CD4-positive, alpha-beta memory T cell (primary cell): ENCODE measurements at regions of chr5 and their contacts with region 1.

Region 1: GRCh38 chr5:72307968-72308852 is 11.8 kb downstream of the MRPS27 start:
- DNase-seq: peak; percentile 95 to 96 (median 96)
- H3K4me3 ChIP-seq: peak overlapping the region; percentile 79 to 94
- H3K4me3 Mint-ChIP-seq: peak overlapping the region; percentile 72 to 94 (median 92)
- H3K27ac ChIP-seq: peak overlapping the region; percentile 88
- H3K27ac Mint-ChIP-seq: peak overlapping the region; percentile 79 to 97 (median 95)
- H3K4me1 ChIP-seq: peaks cover 13% of the 10 kb centered on the region
- H3K4me1 Mint-ChIP-seq: peaks cover 10 to 22% (median 18%) of the 10 kb centered on the region in 4 donors
- H3K27me3 ChIP-seq: no peaks in the 10 kb centered on the region
- H3K27me3 Mint-ChIP-seq: no peaks in the 10 kb centered on the region

Region 2: DNA sequence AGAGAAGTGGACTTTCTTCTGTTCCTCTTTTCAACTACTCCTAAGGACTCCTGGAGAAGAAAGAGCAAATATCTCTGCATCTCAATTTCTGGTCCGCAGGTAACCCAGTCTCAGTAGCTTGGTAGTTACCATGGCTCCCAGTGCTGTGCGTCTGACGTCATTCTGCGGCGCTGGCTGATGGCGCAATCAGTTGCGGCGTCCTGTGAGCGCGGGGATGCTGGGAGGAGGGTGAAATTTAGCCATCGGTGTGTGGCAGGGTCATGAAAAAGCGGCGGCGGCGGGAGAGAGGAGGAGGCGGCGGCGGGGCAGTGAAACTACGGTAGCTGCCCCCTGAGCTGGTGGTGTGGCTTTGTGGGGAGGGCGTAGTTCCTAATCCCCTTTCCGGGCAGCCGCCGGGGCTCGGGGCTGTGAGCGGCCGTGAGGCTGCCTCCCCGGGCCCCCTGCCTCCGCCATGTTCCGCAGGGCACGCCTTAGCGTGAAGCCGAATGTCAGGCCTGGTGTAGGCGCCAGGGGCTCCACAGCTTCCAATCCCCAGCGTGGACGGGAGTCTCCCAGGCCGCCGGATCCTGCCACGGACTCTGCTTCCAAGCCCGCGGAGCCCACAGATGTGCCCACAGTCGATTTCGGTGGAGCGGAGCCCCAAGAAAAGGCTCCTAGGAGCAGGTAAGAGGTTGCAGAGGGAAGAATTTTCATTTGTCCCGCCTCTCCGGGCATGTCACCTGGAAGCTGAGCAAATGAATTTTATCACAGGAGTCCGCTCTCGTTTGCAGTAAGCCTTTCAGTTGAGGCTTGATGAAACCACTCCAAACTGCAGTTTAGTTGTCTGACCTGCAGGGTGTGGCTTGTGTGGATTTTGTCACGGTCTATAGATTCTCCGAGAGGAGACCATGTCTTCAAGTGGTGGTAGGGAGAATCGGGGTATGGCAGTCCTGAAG is 852.5 kb before region 1 on chr5 and contains the start of gene BDP1:
- CTCF ChIA-PET with region 1: no interaction called
- POLR2A ChIA-PET with region 1: no interaction called
- intact Hi-C with region 1: loop called (anchors 5 kb)
- DNase-seq: peak; percentile 96 to 98 (median 97)
- H3K4me3 ChIP-seq: peak within 1 kb of the TSS; percentile 93 to 96
- H3K4me3 Mint-ChIP-seq: peak within 1 kb of the TSS; percentile 96 to 100 (median 98)
- H3K27ac ChIP-seq: peak within 1 kb of the TSS; percentile 84
- H3K27ac Mint-ChIP-seq: peak within 1 kb of the TSS; percentile 93 to 100 (median 99)
- H3K4me1 ChIP-seq: peaks cover 23% of the 10 kb centered on the region
- H3K4me1 Mint-ChIP-seq: peaks cover 21 to 36% (median 30%) of the 10 kb centered on the region in 4 donors
- H3K27me3 ChIP-seq: peaks cover 5% of the 10 kb centered on the region
- H3K27me3 Mint-ChIP-seq: peaks cover 5 to 7% of the 10 kb centered on the region in 2 donors
- total RNA-seq, gene BDP1: 45.1 to 47.9 TPM

Region 3: DNA sequence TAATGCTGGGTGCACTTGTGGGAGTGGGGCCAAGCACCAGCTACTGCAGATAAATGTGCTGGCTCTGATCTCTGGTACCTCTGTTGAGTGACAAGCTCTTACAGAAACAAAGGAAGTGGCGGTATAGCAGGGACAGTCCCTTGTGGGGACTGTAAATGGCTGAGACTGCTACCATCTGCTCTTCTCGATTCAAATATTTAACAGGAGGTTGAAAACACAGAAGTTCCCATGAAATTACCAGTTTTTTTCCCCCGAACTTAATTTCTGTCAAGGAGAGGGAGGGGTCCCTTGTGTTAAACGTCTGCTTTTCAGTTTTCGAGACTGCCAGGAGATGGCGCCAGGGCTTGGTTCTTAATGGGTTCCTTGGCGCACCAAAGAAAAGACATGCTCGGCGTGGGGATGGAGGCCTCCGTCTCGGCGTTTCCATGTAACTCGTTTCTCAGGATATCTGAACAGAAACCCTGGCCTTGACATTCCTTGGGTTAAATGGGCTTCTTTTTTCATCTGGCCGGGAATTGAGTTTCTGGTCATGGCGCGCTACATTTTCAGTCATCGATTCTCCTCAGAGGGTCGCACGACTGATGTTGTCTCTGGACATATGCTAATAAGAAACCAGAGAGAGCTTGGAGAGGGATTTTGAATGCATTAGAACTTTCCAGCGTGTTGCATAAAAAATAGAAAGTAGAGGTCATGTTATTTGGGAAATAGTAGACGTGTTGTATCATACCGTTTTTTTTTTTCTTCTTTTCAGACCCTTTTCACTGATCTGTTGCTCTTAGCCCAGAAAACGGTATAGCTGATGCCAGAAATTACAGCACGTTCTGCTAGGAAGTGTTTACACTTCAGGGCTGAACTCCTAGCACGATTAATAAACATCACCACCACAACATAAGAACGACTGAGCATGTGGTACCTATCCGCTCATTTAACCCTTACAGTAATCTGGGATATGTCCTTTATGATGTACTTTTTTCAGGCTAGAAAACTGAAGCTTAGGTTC is 525.1 kb before region 1 on chr5:
- CTCF ChIA-PET with region 1: interaction called, 13 read pairs
- POLR2A ChIA-PET with region 1: no interaction called
- intact Hi-C with region 1: no loop called
- DNase-seq: peak in 4 of 5 donors; percentile 10 to 12 (median 12)
- H3K4me3 ChIP-seq: peak overlapping the region in 1 of 2 donors; percentile 9
- H3K4me3 Mint-ChIP-seq: peak overlapping the region; percentile 54 to 77 (median 72)
- H3K27ac ChIP-seq: no peak overlapping the region
- H3K27ac Mint-ChIP-seq: peak overlapping the region in 6 of 7 donors; percentile 5 to 67 (median 50)
- H3K4me1 ChIP-seq: peaks cover 16% of the 10 kb centered on the region
- H3K4me1 Mint-ChIP-seq: peaks cover 8 to 19% (median 15%) of the 10 kb centered on the region in 4 donors
- H3K27me3 ChIP-seq: no peaks in the 10 kb centered on the region
- H3K27me3 Mint-ChIP-seq: peaks cover 1 to 10% of the 10 kb centered on the region in 2 donors

Region 4: GRCh38 chr5:72138943-72139521 is 169.2 kb before region 1 on chr5:
- CTCF ChIA-PET with region 1: interaction called, 45 read pairs
- POLR2A ChIA-PET with region 1: interaction called, 4 read pairs
- intact Hi-C with region 1: loop called (anchors 1 kb)
- DNase-seq: no peak
- H3K4me3 ChIP-seq: no peak overlapping the region
- H3K4me3 Mint-ChIP-seq: no peak overlapping the region
- H3K27ac ChIP-seq: no peak overlapping the region
- H3K27ac Mint-ChIP-seq: no peak overlapping the region
- H3K4me1 ChIP-seq: no peaks in the 10 kb centered on the region
- H3K4me1 Mint-ChIP-seq: peaks cover 0 to 4% (median under 1%) of the 10 kb centered on the region in 4 donors
- H3K27me3 ChIP-seq: no peaks in the 10 kb centered on the region
- H3K27me3 Mint-ChIP-seq: peaks cover 12 to 19% of the 10 kb centered on the region in 2 donors

Region 5: GRCh38 chr5:72234265-72234700 is 73.9 kb before region 1 on chr5:
- CTCF ChIA-PET with region 1: interaction called, 8 read pairs
- POLR2A ChIA-PET with region 1: interaction called, 5 read pairs
- intact Hi-C with region 1: loop called (anchors 5 kb)
- DNase-seq: peak; percentile 64 to 71 (median 67)
- H3K4me3 ChIP-seq: no peak overlapping the region
- H3K4me3 Mint-ChIP-seq: peak overlapping the region in 5 of 8 donors; percentile 13 to 70 (median 41)
- H3K27ac ChIP-seq: no peak overlapping the region
- H3K27ac Mint-ChIP-seq: peak overlapping the region in 3 of 7 donors; percentile 6 to 62 (median 20)
- H3K4me1 ChIP-seq: peaks cover 45% of the 10 kb centered on the region
- H3K4me1 Mint-ChIP-seq: peaks cover 31 to 47% (median 39%) of the 10 kb centered on the region in 4 donors
- H3K27me3 ChIP-seq: no peaks in the 10 kb centered on the region
- H3K27me3 Mint-ChIP-seq: no peaks in the 10 kb centered on the region

Region 6: GRCh38 chr5:72293495-72294055 is 14.6 kb before region 1 on chr5:
- CTCF ChIA-PET with region 1: interaction called, 14 read pairs
- POLR2A ChIA-PET with region 1: interaction called, 4 read pairs
- intact Hi-C with region 1: no loop called
- DNase-seq: no peak
- H3K4me3 ChIP-seq: no peak overlapping the region
- H3K4me3 Mint-ChIP-seq: no peak overlapping the region
- H3K27ac ChIP-seq: no peak overlapping the region
- H3K27ac Mint-ChIP-seq: no peak overlapping the region
- H3K4me1 ChIP-seq: no peaks in the 10 kb centered on the region
- H3K4me1 Mint-ChIP-seq: peaks cover 3 to 5% (median 4%) of the 10 kb centered on the region in 4 donors
- H3K27me3 ChIP-seq: no peaks in the 10 kb centered on the region
- H3K27me3 Mint-ChIP-seq: no peaks in the 10 kb centered on the region

Region 7: DNA sequence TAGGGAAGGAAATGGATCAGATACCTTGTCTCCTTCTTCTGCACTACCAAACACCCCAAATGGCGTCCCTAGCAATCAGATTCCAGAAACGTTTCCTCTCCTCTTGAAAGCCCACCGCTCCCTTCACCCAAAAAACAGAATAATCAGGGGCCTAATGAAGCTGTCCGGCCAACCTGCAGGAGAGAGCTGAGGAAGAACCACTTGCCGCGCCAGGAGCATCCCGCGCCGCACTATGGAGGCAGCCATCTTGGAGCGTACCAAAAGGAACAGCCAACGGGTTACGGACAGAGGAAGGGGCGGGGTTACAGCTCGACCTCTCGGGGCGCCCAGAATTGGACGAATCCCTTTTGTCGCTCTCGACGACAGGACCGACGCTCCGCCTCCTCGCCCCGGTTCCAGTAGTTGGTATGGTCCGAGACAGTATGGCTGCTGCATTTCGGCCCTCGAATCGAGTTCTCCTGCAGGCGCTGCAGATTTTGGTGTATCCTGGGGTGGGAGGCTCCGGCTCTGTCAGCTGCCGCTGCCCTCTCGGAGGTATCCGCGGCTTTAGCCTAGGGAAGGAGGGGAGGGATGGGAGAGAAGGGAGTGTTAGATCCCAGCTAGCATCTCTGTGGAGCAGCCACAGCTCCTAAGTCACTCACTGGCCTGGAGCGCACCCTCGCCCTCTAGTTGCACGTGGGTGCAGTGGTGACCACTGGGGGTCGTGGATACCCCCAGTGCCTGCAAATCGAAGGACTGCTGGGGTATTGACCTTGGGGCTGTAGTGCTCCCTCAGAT is 12.0 kb after region 1 on chr5 and contains the starts of genes MRPS27 and PTCD2:
- CTCF ChIA-PET with region 1: interaction called, 36 read pairs
- POLR2A ChIA-PET with region 1: interaction called, 81 read pairs
- intact Hi-C with region 1: loop called (anchors 1 kb)
- DNase-seq: peak; percentile 92 to 97 (median 96)
- H3K4me3 ChIP-seq: peak within 1 kb of the TSS; percentile 100
- H3K4me3 Mint-ChIP-seq: peak within 1 kb of the TSS; percentile 96 to 99 (median 98)
- H3K27ac ChIP-seq: peak within 1 kb of the TSS; percentile 65
- H3K27ac Mint-ChIP-seq: peak within 1 kb of the TSS; percentile 87 to 97 (median 96)
- H3K4me1 ChIP-seq: peaks cover 9% of the 10 kb centered on the region
- H3K4me1 Mint-ChIP-seq: peaks cover 19 to 49% (median 25%) of the 10 kb centered on the region in 4 donors
- H3K27me3 ChIP-seq: no peaks in the 10 kb centered on the region
- H3K27me3 Mint-ChIP-seq: no peaks in the 10 kb centered on the region
- total RNA-seq, gene MRPS27: 36.6 to 44.6 TPM
- total RNA-seq, gene PTCD2: 11.6 to 12.0 TPM